Naive thymus-derived CD4-positive, alpha-beta T cell (primary cell): ENCODE measurements at regions of chr1 and their contacts with region 1.

Region 1: GRCh38 chr1:185317034-185317885 is at the start of gene IVNS1ABP:
- DNase-seq: peak; percentile 91 to 97 (median 95)
- ATAC-seq: peak; percentile 88
- H3K4me3 ChIP-seq: peak within 1 kb of the TSS; percentile 95
- H3K4me3 Mint-ChIP-seq: peak within 1 kb of the TSS; percentile 92 to 100 (median 98)
- H3K27ac ChIP-seq: peak within 1 kb of the TSS; percentile 99
- H3K27ac Mint-ChIP-seq: peak within 1 kb of the TSS; percentile 96 to 99 (median 99)
- H3K4me1 ChIP-seq: peaks cover 31 to 42% of the 10 kb centered on the region in 2 donors
- H3K4me1 Mint-ChIP-seq: peaks cover 39 to 55% (median 46%) of the 10 kb centered on the region in 7 donors
- H3K27me3 ChIP-seq: no peaks in the 10 kb centered on the region
- H3K27me3 Mint-ChIP-seq: peaks cover 0 to 2% (median 0%) of the 10 kb centered on the region in 5 donors
- total RNA-seq, gene IVNS1ABP: 169 to 268 (median 193) TPM

Region 2: GRCh38 chr1:183635606-183636333 is 1681.5 kb before region 1 on chr1 and contains the start of gene ARPC5:
- CTCF ChIA-PET with region 1: no interaction called
- POLR2A ChIA-PET with region 1: no interaction called
- intact Hi-C with region 1: loop called in 1 of 2 experiments (anchors 5 kb)
- DNase-seq: peak; percentile 90 to 98 (median 92)
- ATAC-seq: peak; percentile 92
- H3K4me3 ChIP-seq: peak within 1 kb of the TSS; percentile 94
- H3K4me3 Mint-ChIP-seq: peak within 1 kb of the TSS; percentile 95 to 100 (median 100)
- H3K27ac ChIP-seq: peak within 1 kb of the TSS; percentile 80
- H3K27ac Mint-ChIP-seq: peak within 1 kb of the TSS; percentile 94 to 100 (median 99)
- H3K4me1 ChIP-seq: peaks cover 14 to 22% of the 10 kb centered on the region in 2 donors
- H3K4me1 Mint-ChIP-seq: peaks cover 15 to 50% (median 39%) of the 10 kb centered on the region in 7 donors
- H3K27me3 ChIP-seq: no peaks in the 10 kb centered on the region
- H3K27me3 Mint-ChIP-seq: peaks cover 0 to 27% (median 0%) of the 10 kb centered on the region in 5 donors
- total RNA-seq, gene ARPC5: 49.9 to 252 (median 105) TPM

Region 3: DNA sequence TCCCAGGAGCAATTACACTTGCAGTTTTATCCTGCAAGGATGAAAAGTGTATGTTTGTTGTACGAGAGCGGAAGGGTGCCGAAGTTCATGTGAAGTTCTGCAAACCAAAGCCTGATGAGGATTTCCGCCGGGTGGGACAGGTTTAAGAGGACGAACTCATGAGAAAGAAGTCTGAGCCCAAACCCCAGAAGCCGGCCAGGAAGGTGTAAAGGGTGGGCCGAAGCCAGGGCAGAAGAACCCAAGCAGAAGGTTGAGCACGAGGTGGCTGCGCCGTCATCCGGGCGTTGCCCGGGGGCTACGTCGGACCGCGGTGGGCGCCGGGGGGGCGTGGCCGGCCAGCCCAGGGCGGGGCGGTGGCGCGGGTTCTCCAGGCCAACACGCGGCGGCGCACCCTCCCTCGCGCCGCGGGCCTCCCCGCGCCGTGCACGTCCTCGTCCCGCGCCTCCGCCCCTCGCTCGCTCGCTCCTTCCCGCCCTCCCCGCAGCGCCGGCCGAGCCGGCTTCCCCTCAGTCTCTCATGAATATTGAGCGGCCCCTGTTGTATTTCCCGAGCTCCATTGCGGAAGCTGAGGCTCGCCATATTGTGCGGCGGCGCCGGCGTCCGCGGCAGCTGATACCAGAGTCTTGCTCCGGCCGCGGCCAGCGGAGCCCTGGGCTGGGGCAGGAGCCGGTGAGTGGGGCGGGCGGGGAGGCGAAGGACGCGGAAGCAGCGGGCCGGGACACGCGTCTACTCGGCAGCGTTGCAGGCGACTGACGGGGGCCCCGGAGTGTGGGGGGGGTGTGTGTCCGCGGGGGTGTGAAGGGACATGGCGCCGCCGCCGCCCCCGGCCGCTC is 272.1 kb before region 1 on chr1 and contains the start of gene RNF2:
- CTCF ChIA-PET with region 1: no interaction called
- POLR2A ChIA-PET with region 1: no interaction called
- intact Hi-C with region 1: loop called (anchors 2 to 10 kb)
- DNase-seq: peak; percentile 64 to 80 (median 77)
- ATAC-seq: peak; percentile 95
- H3K4me3 ChIP-seq: peak within 1 kb of the TSS; percentile 74
- H3K4me3 Mint-ChIP-seq: peak within 1 kb of the TSS; percentile 87 to 96 (median 92)
- H3K27ac ChIP-seq: peak within 1 kb of the TSS; percentile 75
- H3K27ac Mint-ChIP-seq: peak within 1 kb of the TSS; percentile 69 to 96 (median 88)
- H3K4me1 ChIP-seq: peaks cover 11 to 15% of the 10 kb centered on the region in 2 donors
- H3K4me1 Mint-ChIP-seq: peaks cover 27 to 56% (median 45%) of the 10 kb centered on the region in 7 donors
- H3K27me3 ChIP-seq: no peaks in the 10 kb centered on the region
- H3K27me3 Mint-ChIP-seq: peaks cover 0 to 26% (median 0%) of the 10 kb centered on the region in 5 donors
- total RNA-seq, gene RNF2: 14.9 to 27.7 (median 19.6) TPM

Region 4: DNA sequence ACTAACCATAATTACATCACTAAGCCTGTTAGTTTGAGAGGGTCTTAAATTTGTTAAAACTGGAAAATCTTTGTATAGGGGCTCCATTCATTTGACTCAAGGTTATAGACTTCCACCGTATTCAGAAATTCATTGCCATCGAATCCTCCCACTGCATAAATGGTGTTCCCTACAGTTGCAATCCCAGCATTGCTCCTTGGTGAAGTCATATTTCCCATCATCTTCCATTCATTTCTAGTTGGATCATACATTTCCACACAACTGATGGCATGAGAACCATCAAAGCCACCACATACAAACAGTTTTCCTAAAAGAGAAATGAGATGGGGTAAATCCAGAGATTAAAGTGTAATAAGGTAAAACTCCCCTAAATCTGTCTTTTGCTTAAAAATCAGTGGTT is 19.3 kb before region 1 on chr1:
- CTCF ChIA-PET with region 1: interaction called, 3 read pairs
- POLR2A ChIA-PET with region 1: interaction called, 14 read pairs
- intact Hi-C with region 1: loop called in 1 of 2 experiments (anchors 2 kb)
- DNase-seq: no peak
- ATAC-seq: no peak
- H3K4me3 ChIP-seq: no peak overlapping the region
- H3K4me3 Mint-ChIP-seq: no peak overlapping the region
- H3K27ac ChIP-seq: no peak overlapping the region
- H3K27ac Mint-ChIP-seq: peak overlapping the region in 7 of 9 donors; percentile 12 to 69 (median 51)
- H3K4me1 ChIP-seq: peaks cover 0 to 2% of the 10 kb centered on the region in 2 donors
- H3K4me1 Mint-ChIP-seq: peaks cover 2 to 26% (median 19%) of the 10 kb centered on the region in 7 donors
- H3K27me3 ChIP-seq: no peaks in the 10 kb centered on the region
- H3K27me3 Mint-ChIP-seq: no peaks in the 10 kb centered on the region

Region 5: GRCh38 chr1:185559684-185560331 is 242.5 kb after region 1 on chr1:
- CTCF ChIA-PET with region 1: no interaction called
- POLR2A ChIA-PET with region 1: interaction called, 28 read pairs
- intact Hi-C with region 1: loop called in 1 of 2 experiments (anchors 1 kb)
- DNase-seq: peak in 8 of 9 donors; percentile 9 to 57 (median 18)
- ATAC-seq: peak; percentile 91
- H3K4me3 ChIP-seq: no peak overlapping the region
- H3K4me3 Mint-ChIP-seq: peak overlapping the region in 8 of 10 donors; percentile 46 to 70 (median 58)
- H3K27ac ChIP-seq: no peak overlapping the region
- H3K27ac Mint-ChIP-seq: peak overlapping the region; percentile 63 to 91 (median 81)
- H3K4me1 ChIP-seq: peaks cover 26 to 35% of the 10 kb centered on the region in 2 donors
- H3K4me1 Mint-ChIP-seq: peaks cover 36 to 53% (median 48%) of the 10 kb centered on the region in 7 donors
- H3K27me3 ChIP-seq: no peaks in the 10 kb centered on the region
- H3K27me3 Mint-ChIP-seq: no peaks in the 10 kb centered on the region

Region 6: DNA sequence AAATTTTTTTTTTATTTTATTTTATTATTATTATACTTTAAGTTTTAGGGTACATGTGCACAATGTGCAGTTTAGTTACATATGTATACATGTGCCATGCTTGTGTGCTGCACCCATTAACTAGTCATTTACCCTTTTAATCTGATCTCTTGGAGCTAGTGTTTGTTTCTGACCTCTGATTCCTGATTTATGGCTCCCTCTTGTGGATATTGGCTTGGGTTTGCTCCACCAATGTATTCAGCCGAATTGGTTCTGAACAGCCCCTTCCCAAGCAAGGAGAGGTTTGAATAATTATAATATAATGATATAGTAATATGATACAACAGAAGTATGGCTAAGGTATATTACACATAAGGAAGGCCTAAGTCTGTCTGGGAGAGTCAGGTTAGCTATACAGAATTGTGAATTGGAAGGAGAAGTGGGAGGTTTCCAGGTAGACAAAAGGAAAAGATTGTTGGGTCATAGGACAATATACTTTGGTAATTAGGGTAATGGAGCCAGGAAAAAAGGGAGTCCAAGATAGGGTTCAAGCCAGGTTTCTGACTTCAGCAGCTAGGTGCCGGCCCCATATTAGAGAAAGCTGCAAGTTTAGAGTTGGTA is 363.9 kb after region 1 on chr1:
- CTCF ChIA-PET with region 1: interaction called, 18 read pairs
- POLR2A ChIA-PET with region 1: interaction called, 44 read pairs
- intact Hi-C with region 1: loop called (anchors 1 kb)
- DNase-seq: peak in 6 of 9 donors; percentile 19 to 53 (median 40)
- ATAC-seq: peak; percentile 65
- H3K4me3 ChIP-seq: no peak overlapping the region
- H3K4me3 Mint-ChIP-seq: peak overlapping the region in 2 of 10 donors; percentile 12 to 39
- H3K27ac ChIP-seq: no peak overlapping the region
- H3K27ac Mint-ChIP-seq: peak overlapping the region in 1 of 9 donors; percentile 14
- H3K4me1 ChIP-seq: peaks cover 4 to 13% of the 10 kb centered on the region in 2 donors
- H3K4me1 Mint-ChIP-seq: peaks cover 13 to 41% (median 28%) of the 10 kb centered on the region in 7 donors
- H3K27me3 ChIP-seq: no peaks in the 10 kb centered on the region
- H3K27me3 Mint-ChIP-seq: peaks cover 0 to 16% (median 0%) of the 10 kb centered on the region in 5 donors

Region 7: GRCh38 chr1:186315570-186315969 is 998.3 kb after region 1 on chr1:
- CTCF ChIA-PET with region 1: no interaction called
- POLR2A ChIA-PET with region 1: no interaction called
- intact Hi-C with region 1: no loop called
- DNase-seq: no peak
- ATAC-seq: no peak
- H3K4me3 ChIP-seq: no peak overlapping the region
- H3K4me3 Mint-ChIP-seq: peak overlapping the region in 1 of 10 donors; percentile 15
- H3K27ac ChIP-seq: no peak overlapping the region
- H3K27ac Mint-ChIP-seq: peak overlapping the region in 8 of 9 donors; percentile 5 to 68 (median 50)
- H3K4me1 ChIP-seq: no peaks in the 10 kb centered on the region
- H3K4me1 Mint-ChIP-seq: peaks cover 1 to 33% (median 20%) of the 10 kb centered on the region in 7 donors
- H3K27me3 ChIP-seq: no peaks in the 10 kb centered on the region
- H3K27me3 Mint-ChIP-seq: no peaks in the 10 kb centered on the region